ENCODE measurements at regions of chr3 and their contacts with region 1.

Region 1: DNA sequence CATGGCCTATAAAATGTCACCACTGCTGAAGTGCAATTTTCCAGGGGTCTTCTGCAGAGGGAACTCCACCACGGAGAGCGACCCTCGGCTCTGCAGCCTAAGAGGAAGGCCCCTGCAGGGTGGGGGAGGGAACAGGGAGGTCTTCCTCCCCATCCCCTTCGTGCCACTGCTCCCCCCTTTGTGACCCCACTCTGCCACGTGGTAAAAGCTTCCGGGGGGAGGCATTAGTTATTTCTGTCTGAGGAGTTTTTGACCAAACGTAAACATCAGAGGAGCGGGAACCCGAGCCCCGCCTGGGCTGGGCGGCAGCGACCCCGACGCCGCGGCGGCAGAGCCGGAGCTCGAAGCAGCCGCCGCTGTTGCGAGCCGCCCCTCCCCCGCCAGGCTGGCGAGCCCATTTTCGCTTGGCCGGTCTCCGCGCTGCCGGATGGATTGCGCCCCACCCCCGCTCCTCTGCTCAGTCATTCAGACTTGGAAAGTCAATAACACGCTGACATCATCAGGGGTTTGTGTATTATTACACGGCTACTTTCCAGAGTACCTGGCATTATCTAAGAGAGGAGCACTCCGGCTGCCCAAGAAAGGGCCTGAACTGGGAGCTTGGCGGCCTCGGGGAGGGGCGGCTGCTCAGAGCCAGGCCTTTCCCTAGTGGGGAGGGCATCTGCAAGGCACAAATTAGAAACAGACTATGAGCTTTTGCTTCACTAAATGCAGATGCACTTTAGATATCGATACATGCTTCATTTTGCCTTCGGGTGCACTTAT is 162.5 kb upstream of the TBL1XR1 start:
- DNase-seq: peak; percentile 95 to 96 (median 96)
- H3K4me3 ChIP-seq: peak overlapping the region; percentile 54 to 65
- H3K4me3 Mint-ChIP-seq: peak overlapping the region; percentile 88 to 98 (median 94)
- H3K27ac ChIP-seq: peak overlapping the region; percentile 96
- H3K27ac Mint-ChIP-seq: peak overlapping the region; percentile 96 to 100 (median 99)
- H3K4me1 ChIP-seq: peaks cover 50% of the 10 kb centered on the region
- H3K4me1 Mint-ChIP-seq: peaks cover 33 to 63% (median 49%) of the 10 kb centered on the region in 4 donors
- H3K27me3 ChIP-seq: no peaks in the 10 kb centered on the region
- H3K27me3 Mint-ChIP-seq: peaks cover 1 to 7% of the 10 kb centered on the region in 2 donors

Region 2: GRCh38 chr3:177050501-177051237 is 309.1 kb before region 1 on chr3:
- CTCF ChIA-PET with region 1: interaction called, 32 read pairs
- POLR2A ChIA-PET with region 1: interaction called, 31 read pairs
- intact Hi-C with region 1: loop called (anchors 1 kb)
- DNase-seq: peak in 4 of 5 donors; percentile 53 to 64 (median 55)
- H3K4me3 ChIP-seq: no peak overlapping the region
- H3K4me3 Mint-ChIP-seq: no peak overlapping the region
- H3K27ac ChIP-seq: no peak overlapping the region
- H3K27ac Mint-ChIP-seq: peak overlapping the region in 6 of 7 donors; percentile 16 to 76 (median 38)
- H3K4me1 ChIP-seq: peaks cover 8% of the 10 kb centered on the region
- H3K4me1 Mint-ChIP-seq: peaks cover 15 to 19% (median 16%) of the 10 kb centered on the region in 4 donors
- H3K27me3 ChIP-seq: no peaks in the 10 kb centered on the region
- H3K27me3 Mint-ChIP-seq: no peaks in the 10 kb centered on the region

Region 3: DNA sequence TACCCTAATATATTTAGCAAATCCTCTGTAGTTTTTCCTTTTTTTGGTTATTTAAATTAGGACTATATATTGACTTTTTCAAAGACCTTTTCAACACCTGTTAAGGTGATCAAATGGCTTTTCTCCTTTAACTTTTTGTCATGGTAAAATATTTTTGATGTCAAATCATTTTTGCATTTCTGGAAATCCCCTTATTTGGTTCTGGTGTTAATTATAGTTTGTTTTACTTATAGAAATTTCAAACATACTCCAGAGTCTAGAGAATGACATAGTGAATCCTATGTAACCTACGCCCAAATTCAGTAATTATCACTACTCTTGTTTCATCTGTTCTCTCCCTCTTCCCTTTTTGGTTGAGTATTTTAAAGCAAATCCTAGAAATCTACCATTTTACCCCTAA is 41.2 kb before region 1 on chr3:
- CTCF ChIA-PET with region 1: no interaction called
- POLR2A ChIA-PET with region 1: interaction called, 8 read pairs
- intact Hi-C with region 1: loop called (anchors 1 kb)
- DNase-seq: no peak
- H3K4me3 ChIP-seq: no peak overlapping the region
- H3K4me3 Mint-ChIP-seq: no peak overlapping the region
- H3K27ac ChIP-seq: no peak overlapping the region
- H3K27ac Mint-ChIP-seq: peak overlapping the region in 1 of 7 donors; percentile 35
- H3K4me1 ChIP-seq: peaks cover 29% of the 10 kb centered on the region
- H3K4me1 Mint-ChIP-seq: peaks cover 23 to 44% (median 30%) of the 10 kb centered on the region in 4 donors
- H3K27me3 ChIP-seq: no peaks in the 10 kb centered on the region
- H3K27me3 Mint-ChIP-seq: no peaks in the 10 kb centered on the region

Region 4: DNA sequence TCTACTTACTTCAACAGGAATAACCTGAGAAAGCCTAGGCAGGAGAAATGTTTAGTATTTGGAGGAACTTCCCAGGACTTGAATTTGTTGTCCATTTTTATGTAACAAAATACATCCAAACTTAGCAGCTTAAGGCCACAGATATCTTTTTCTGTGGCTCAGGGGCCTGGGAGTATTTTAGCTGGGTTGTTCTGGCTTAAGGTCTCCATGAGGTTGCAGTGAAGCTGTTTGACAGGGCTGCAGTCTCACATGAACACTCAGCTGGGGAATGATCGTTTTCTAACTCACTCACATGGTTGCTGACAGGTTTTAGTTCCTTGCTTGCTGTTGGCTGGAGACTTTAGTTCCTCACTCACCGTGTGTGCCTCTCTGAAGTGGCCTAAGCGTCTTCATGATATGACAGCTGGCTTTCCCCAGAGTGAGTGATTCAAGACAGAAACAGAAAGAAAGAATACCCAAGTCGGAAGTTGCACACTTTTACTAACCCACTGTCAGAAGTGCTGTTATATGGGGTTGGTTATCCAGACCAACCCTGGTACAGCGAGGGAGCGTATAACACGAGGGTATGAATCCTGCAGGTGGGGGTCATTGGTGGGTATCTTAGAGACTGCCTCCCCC is 67.2 kb after region 1 on chr3:
- CTCF ChIA-PET with region 1: no interaction called
- POLR2A ChIA-PET with region 1: interaction called, 10 read pairs
- intact Hi-C with region 1: loop called (anchors 5 kb)
- DNase-seq: peak; percentile 46 to 61 (median 57)
- H3K4me3 ChIP-seq: peak overlapping the region; percentile 8 to 10
- H3K4me3 Mint-ChIP-seq: peak overlapping the region; percentile 38 to 90 (median 75)
- H3K27ac ChIP-seq: peak overlapping the region; percentile 46
- H3K27ac Mint-ChIP-seq: peak overlapping the region; percentile 56 to 96 (median 92)
- H3K4me1 ChIP-seq: peaks cover 39% of the 10 kb centered on the region
- H3K4me1 Mint-ChIP-seq: peaks cover 22 to 37% (median 32%) of the 10 kb centered on the region in 4 donors
- H3K27me3 ChIP-seq: no peaks in the 10 kb centered on the region
- H3K27me3 Mint-ChIP-seq: no peaks in the 10 kb centered on the region

Region 5: DNA sequence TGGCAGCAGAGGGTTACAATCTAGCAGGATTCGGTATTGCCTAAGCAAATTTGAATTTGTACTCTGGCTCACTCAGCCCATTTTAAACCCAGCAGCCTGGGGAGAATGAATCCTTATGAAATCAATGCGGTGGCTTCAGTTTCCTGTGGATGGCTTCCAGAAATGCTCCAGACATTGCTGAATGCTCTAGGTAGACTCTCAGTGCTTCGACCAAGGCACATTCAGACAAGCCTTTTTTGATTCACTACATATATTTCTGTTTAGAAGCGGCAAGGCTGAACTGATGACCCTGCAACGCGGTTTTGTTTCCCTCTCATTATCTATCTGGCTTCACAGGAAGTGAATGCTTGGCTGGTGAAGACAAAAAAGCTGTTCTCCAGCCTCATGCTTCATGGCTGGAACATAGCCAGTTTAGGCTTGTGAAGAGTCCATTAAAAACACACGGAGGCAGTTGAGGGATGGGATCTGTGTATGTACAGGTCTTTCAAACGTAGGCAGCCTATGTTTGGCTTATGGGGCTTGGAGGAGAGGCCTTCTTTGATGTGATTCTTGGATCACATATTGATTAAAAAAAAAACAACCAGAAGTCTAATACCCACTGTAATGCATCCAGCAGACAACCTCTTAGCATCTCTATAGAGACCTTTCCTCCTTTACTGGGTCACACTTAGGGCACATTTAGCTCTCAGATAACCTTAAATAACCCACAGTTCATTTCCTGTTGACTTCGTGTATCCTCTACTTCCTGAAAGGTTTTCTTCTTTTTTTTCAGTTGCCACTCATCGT is 237.7 kb after region 1 on chr3:
- CTCF ChIA-PET with region 1: interaction called, 4 read pairs
- POLR2A ChIA-PET with region 1: interaction called, 42 read pairs
- intact Hi-C with region 1: loop called (anchors 1 kb)
- DNase-seq: peak; percentile 55 to 67 (median 57)
- H3K4me3 ChIP-seq: peak overlapping the region; percentile 18 to 49
- H3K4me3 Mint-ChIP-seq: peak overlapping the region; percentile 10 to 87 (median 77)
- H3K27ac ChIP-seq: peak overlapping the region; percentile 60
- H3K27ac Mint-ChIP-seq: peak overlapping the region; percentile 92 to 97 (median 95)
- H3K4me1 ChIP-seq: peaks cover 83% of the 10 kb centered on the region
- H3K4me1 Mint-ChIP-seq: peaks cover 67 to 90% (median 75%) of the 10 kb centered on the region in 4 donors
- H3K27me3 ChIP-seq: no peaks in the 10 kb centered on the region
- H3K27me3 Mint-ChIP-seq: no peaks in the 10 kb centered on the region

Region 6: GRCh38 chr3:177777699-177778098 is 417.9 kb after region 1 on chr3:
- CTCF ChIA-PET with region 1: interaction called, 15 read pairs
- POLR2A ChIA-PET with region 1: interaction called, 8 read pairs
- intact Hi-C with region 1: loop called (anchors 1 kb)
- DNase-seq: peak; percentile 8 to 44 (median 26)
- H3K4me3 ChIP-seq: no peak overlapping the region
- H3K4me3 Mint-ChIP-seq: peak overlapping the region in 2 of 8 donors; percentile 17 to 41
- H3K27ac ChIP-seq: no peak overlapping the region
- H3K27ac Mint-ChIP-seq: peak overlapping the region in 3 of 7 donors; percentile 52 to 73 (median 55)
- H3K4me1 ChIP-seq: peaks cover 22% of the 10 kb centered on the region
- H3K4me1 Mint-ChIP-seq: peaks cover 12 to 17% (median 15%) of the 10 kb centered on the region in 4 donors
- H3K27me3 ChIP-seq: no peaks in the 10 kb centered on the region
- H3K27me3 Mint-ChIP-seq: no peaks in the 10 kb centered on the region

Measured in CD4-positive, alpha-beta memory T cell (primary cell).